ENCODE measurements at regions of chr2 and their contacts with region 1.

Region 1: GRCh38 chr2:187499941-187500532 is 52.0 kb upstream of the CALCRL start:
- DNase-seq: no peak

Region 2: GRCh38 chr2:187461294-187462261 is 38.5 kb before region 1 on chr2:
- intact Hi-C with region 1: no loop called
- DNase-seq: peak; percentile 83

Region 3: DNA sequence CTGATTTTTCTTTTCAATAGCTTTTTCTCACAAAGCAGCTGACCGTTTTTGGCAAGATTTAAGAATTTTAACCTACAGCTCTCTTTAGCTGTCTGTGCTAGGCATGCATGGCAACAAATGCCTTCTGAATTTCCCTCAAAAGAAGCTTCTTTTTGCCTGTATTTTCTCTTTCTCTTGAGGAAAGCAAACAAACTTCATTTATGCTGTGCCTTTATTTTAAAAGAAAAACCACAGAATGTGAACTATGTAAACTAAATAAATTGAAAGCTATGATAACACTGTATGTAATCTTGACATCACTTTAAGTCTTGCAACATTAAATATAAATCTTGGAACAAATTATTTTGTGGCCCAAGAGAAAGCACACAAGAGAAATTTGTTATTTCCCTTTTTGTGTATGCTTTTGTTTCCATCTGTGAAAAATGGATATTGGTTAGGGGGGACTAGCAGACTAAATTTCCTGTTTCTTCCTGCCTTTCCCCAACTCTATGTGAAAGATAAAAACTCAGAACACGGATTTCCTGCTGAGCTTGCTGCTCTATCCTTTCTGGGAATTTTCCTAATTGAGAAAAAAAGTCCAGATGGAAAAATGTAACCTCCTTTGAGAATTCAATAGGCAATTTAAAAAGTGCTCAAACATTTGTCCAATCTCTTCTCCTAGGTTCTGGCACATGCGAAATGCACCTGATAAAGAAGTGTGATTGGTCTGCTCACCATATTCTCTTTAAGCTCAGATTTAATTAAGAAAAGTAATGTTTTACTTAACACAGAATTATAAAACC is 75.1 kb after region 1 on chr2:
- intact Hi-C with region 1: loop called (anchors 5 to 10 kb)
- DNase-seq: no peak

Region 4: GRCh38 chr2:187581125-187581896 is 81.3 kb after region 1 on chr2:
- intact Hi-C with region 1: loop called (anchors 5 to 10 kb)
- DNase-seq: no peak

Measured in posterior vena cava (tissue), 2 donors.